ENCODE measurements at regions of chr1 and their contacts with region 1.

Region 1: DNA sequence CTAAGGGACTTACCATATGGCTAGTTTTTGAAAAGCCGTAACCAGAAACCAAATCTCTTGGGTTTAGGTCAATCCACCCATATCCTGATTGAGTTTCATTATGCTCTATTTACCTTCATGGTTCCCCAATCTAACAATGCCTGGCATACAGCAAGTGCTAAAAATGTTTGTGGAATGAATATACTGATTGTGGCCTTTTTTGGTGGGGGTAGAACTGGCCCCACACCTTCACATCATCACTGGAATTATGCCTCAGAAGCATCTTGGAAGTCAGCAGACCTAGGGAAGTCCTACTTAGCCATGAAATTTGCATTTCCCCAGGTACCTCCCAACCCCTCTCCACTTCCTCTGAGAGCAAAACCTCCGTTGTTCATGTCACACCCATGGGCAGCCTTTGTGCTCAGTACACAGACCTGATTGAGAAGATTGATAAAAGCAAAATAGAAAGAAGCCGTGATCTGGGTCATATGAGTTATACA is 17.8 kb upstream of the SLAMF1 start:
- H3K4me3 ChIP-seq: no peak overlapping the region
- H3K27ac ChIP-seq: no peak overlapping the region
- H3K4me1 ChIP-seq: no peaks in the 10 kb centered on the region
- CTCF ChIP-seq: no peak

Region 2: DNA sequence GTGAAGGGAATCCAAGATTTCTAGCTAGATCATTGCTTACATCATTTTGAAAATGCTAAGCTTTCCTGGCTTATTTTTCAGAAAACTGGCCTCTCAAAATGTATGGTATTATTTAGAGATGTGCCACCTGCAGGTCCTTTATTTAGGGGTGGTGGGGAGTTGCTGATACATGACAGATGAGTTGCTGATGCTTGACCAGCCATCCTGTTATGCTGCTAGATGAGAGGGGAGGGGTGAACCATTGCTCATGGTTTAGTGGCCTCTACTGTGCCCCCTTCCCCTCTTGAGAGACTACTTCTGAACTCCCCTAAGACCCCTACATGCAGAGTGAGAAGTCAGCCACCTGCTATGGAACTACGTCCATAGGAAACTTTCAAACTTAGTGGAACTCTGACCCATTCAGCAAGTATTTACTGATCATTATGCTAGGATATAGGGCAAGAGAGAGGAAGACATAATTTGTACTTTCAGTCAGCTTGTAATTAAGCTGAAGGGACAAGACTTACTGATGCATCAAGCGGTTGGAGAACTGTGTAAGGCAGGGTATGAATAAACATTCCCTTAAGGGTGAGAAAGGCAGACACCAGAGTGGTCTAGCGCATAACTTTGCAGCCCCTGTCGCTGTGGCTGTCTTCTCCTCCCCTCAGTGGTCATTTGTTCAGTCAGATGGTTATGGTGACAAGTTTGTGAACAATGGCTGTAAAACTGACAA is 176.1 kb before region 1 on chr1:
- CTCF ChIA-PET with region 1: no interaction called
- POLR2A ChIA-PET with region 1: no interaction called
- H3K4me3 ChIP-seq: no peak overlapping the region
- H3K27ac ChIP-seq: no peak overlapping the region
- H3K4me1 ChIP-seq: no peaks in the 10 kb centered on the region
- CTCF ChIP-seq: no peak

Region 3: GRCh38 chr1:160629286-160630210 is 35.1 kb before region 1 on chr1:
- CTCF ChIA-PET with region 1: no interaction called
- POLR2A ChIA-PET with region 1: no interaction called
- H3K4me3 ChIP-seq: no peak overlapping the region
- H3K27ac ChIP-seq: no peak overlapping the region
- H3K4me1 ChIP-seq: no peaks in the 10 kb centered on the region
- CTCF ChIP-seq: no peak

Region 4: DNA sequence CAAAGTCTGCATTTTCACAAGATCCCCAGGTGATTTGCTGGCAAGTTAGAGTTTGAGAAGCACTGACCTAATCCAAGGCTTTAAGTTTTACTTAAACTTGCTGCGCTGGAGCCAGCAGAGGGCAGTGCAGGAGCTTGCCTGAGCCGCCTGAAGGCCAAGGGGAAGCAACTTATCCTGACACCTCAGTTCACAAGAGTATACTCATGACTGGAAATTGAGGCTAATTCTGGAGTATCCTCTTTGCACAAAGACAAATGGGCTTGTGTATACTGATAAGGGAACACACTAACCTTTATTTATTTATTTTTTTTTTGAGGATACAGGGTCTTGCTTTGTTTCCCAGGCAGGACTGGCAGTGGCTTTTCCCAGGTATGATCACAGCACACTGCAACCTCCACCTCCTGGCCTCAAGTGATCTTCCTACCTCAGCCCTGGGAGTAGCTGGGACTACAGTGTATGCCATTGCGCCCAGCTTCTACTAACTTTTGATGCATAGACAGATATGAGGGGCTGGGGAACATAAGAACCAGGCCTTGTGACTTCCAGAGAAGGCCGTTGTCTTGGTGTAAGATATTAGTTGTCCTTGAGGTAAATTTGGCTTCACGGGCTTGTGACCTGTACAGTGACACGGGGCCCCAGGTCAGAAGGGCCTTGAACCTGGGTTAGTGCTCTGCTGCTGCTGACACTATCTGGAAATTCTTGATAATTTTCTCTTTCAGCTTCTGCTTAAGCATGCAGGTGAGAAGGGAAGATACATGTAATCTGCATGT is 11.2 kb after region 1 on chr1:
- CTCF ChIA-PET with region 1: interaction called, 10 read pairs
- POLR2A ChIA-PET with region 1: no interaction called
- H3K4me3 ChIP-seq: no peak overlapping the region
- H3K27ac ChIP-seq: no peak overlapping the region
- H3K4me1 ChIP-seq: no peaks in the 10 kb centered on the region
- CTCF ChIP-seq: peak; percentile 30; the same call in 1 of the 2 replicates

Region 5: DNA sequence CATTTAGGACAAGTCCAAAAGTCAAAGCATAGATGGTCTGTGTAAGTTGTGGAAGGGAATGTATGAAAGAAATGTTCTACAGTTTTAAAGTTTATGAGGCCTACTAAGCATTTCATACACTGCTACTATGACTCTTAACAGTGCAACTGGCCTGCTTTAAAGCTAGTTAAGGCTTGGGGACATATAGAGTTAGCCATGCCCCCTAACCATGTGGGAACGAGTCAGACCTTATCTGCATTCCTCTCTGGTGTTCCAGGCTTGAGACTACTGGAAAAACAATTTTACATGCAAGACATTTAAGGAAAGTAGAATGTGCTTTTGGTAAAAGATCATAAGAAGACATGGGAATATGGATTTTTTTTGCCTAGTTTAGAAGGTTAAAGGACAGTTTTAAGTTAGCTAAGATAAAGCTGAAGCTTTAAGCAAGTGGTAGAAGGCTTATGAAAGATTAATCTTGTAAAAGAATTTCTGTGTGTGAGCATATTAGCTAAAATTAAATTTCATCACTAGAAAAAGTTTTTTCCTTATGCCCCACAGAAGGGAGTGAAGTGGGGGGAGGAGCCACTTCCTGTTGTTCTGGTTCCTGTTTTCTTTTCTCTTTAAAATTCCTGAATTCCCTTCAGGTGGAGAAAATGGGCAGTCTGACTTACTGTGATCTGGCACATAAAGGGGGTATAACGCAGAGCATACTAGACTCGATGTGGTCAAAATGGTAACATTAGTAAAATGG is 55.9 kb after region 1 on chr1:
- CTCF ChIA-PET with region 1: no interaction called
- POLR2A ChIA-PET with region 1: no interaction called
- H3K4me3 ChIP-seq: no peak overlapping the region
- H3K27ac ChIP-seq: no peak overlapping the region
- H3K4me1 ChIP-seq: no peaks in the 10 kb centered on the region
- CTCF ChIP-seq: no peak

Region 6: GRCh38 chr1:160821628-160822027 is 157.0 kb after region 1 on chr1:
- CTCF ChIA-PET with region 1: no interaction called
- POLR2A ChIA-PET with region 1: no interaction called
- H3K4me3 ChIP-seq: no peak overlapping the region
- H3K27ac ChIP-seq: no peak overlapping the region
- H3K4me1 ChIP-seq: no peaks in the 10 kb centered on the region
- CTCF ChIP-seq: no peak